Activated naive CD4-positive, alpha-beta T cell treated with anti-CD3 and anti-CD28 coated beads for 36 hours (primary cell): ENCODE measurements at regions of chr18 and their contacts with region 1.

Region 1: DNA sequence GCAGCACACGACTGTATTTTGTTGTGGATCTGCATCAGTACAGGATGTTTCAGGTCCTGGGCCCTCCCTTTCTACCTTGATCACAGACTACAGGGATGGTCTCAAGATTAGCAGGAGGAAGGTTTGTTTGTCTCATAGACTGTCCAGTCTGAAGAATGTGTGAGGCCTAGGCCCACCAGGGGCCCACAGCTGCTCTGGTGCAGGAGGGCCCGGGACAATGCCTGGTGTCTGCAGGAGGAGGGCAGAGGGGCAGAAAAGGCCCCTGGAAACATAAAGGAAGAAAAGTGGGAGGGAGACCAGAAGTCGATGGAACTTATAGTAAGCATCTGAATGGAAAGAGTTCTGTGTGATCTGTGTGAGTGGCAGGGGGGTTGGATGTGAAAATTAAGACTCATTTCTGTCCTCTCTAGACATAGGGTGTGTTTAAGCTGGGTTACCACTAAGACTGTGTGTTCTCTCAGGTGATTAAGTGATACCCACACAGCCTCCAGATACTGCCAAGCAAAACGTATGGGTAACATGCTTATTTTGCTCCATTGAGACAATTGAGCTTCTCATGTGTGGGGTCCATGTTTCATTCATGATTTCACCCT is 33.4 kb upstream of the LPIN2 start:
- DNase-seq: peak; percentile 55
- H3K4me3 Mint-ChIP-seq: no peak overlapping the region
- H3K27ac Mint-ChIP-seq: peak overlapping the region; percentile 52
- H3K4me1 Mint-ChIP-seq: peaks cover 29% of the 10 kb centered on the region
- H3K27me3 Mint-ChIP-seq: no peaks in the 10 kb centered on the region

Region 2: DNA sequence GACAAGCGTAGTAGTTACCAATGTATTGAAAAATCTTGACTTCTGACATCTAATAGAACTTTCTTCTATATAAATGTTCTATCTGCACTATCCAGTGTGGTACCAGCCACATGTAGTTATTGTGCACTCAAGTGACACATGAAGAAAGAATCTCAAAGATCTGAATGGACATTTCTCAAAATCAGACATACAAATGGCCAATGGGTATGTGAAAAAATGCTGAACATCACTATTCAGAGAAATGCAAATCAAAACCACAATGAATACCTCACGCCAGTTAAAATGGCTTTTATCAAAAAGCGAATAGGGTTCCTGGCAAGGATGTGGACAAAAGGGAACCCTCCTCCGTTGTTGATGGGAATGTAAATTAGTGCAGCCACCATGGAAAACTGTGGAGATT is 428.3 kb before region 1 on chr18:
- CTCF ChIA-PET with region 1: no interaction called
- intact Hi-C with region 1: no loop called
- DNase-seq: no peak
- H3K4me3 Mint-ChIP-seq: no peak overlapping the region
- H3K27ac Mint-ChIP-seq: no peak overlapping the region
- H3K4me1 Mint-ChIP-seq: no peaks in the 10 kb centered on the region
- H3K27me3 Mint-ChIP-seq: no peaks in the 10 kb centered on the region

Region 3: DNA sequence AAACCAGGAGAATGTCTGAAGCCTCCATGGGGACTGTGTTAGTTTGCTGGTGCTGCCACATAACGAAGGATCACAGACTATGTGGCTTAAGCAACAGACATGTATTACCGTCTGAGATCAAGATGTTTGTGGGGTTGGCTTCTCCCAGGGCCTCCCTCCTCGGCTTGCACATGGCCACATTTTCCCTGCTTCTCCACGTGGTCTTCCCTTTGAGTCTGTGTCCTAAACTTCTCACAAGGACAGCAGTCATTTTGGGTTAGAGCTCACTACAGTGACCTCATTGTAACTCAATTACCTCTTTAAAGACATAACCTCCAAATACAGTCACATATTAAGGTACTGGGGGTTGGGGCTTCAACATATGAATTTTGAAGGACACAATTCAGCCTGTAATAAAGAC is 11.2 kb after region 1 on chr18:
- CTCF ChIA-PET with region 1: interaction called, 22 read pairs
- intact Hi-C with region 1: loop called (anchors 1 kb)
- DNase-seq: no peak
- H3K4me3 Mint-ChIP-seq: no peak overlapping the region
- H3K27ac Mint-ChIP-seq: no peak overlapping the region
- H3K4me1 Mint-ChIP-seq: peaks cover 61% of the 10 kb centered on the region
- H3K27me3 Mint-ChIP-seq: no peaks in the 10 kb centered on the region